ENCODE measurements at regions of chr6 and their contacts with region 1.

Region 1: DNA sequence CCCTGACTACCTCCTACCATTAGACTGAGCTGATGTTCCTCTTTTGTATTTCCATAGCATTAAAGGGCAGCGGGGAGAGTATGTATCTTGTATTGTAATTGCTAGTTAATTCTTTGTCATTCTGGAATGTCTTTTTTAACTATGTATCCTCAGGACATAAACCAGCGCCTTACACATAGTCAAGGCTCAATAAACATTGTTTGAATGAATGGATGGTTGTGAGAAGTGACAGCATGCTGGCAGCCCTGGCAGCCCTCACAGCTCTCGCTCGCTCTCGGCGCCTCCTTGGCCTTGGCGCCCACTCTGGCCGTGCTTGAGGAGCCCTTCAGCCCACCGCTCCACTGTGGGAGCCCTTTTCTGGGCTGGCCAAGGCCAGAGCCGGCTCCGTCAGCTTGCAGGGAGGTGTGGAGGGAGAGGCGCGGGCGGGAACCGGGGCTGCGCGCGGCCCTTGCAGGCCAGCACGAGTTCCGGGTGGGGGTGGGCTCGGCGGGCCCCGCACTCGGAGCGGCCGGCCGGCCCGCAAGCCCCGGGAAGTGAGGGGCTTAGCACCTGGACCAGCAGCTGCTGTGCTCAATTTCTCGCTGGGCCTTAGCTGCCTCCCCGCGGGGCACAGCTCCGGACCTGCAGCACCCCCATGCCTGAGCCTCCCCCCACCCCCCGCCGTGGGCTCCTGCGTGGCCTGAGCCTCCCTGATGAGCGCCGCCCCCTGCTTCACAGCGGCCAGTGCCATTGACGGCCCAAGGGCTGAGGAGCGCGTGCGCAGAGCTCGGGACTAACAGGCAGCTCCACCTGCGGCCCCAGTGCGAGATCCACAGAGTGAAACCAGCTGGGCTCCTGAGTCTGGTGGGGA is 93.1 kb downstream of the RNF182 start:
- DNase-seq: no peak
- H3K4me3 ChIP-seq: no peak overlapping the region
- H3K4me3 Mint-ChIP-seq: no peak overlapping the region
- H3K27ac Mint-ChIP-seq: no peak overlapping the region
- H3K4me1 ChIP-seq: no peaks in the 10 kb centered on the region
- H3K4me1 Mint-ChIP-seq: no peaks in the 10 kb centered on the region
- H3K27me3 ChIP-seq: no peaks in the 10 kb centered on the region
- H3K27me3 Mint-ChIP-seq: peaks cover 4% of the 10 kb centered on the region
- CTCF ChIP-seq: no peak

Region 2: DNA sequence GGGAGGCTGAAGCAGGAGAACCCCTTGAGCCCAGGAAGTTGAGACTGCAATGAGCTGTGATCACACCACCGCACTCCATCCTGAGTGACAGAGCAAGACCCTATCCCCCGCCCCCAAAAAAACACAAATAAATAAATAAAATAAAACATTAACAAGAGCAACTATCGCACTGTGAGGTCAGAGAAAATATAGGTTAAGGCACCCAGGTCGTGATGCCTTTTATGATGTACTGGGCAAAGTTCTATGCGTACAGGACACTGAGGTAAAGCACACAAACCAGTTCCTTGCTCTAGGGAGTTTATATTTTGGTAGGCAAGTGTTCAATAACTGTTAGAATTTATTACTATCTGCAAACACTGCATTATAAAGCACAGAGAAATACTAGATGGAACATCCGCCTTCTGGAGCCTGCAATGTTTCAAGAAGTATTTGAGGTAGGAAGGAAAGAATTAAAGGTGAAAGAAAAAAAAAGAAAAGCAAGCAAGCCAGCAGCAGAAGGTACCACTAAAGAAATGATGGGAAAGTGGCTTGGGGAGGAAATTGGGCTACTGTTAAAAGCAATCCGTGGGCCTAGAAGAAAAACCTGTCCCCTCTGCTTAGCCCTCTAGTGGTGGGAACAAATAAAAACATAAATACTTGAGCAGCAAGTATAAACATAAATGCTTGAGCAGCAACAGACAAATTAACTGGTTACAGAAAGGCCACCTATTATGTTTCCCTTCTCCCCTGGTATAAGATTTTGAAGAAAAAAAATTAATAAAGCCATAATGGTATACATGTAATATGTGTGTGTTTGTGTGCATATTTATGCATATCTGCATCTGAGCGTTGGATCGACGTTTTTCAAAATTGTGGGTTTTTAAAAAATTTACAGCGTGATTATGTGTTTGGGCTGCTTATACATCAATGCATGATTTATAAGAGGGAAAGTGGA is 1173.3 kb before region 1 on chr6:
- CTCF ChIA-PET with region 1: interaction called, 11 read pairs
- POLR2A ChIA-PET with region 1: no interaction called
- intact Hi-C with region 1: no loop called
- DNase-seq: peak in 1 of 2 experiments; percentile 11
- H3K4me3 ChIP-seq: no peak overlapping the region
- H3K4me3 Mint-ChIP-seq: no peak overlapping the region
- H3K27ac Mint-ChIP-seq: no peak overlapping the region
- H3K4me1 ChIP-seq: no peaks in the 10 kb centered on the region
- H3K4me1 Mint-ChIP-seq: no peaks in the 10 kb centered on the region
- H3K27me3 ChIP-seq: no peaks in the 10 kb centered on the region; the same call in 1 of the 2 replicates
- H3K27me3 Mint-ChIP-seq: peaks cover 14% of the 10 kb centered on the region
- CTCF ChIP-seq: peak; percentile 58 to 68

Region 3: DNA sequence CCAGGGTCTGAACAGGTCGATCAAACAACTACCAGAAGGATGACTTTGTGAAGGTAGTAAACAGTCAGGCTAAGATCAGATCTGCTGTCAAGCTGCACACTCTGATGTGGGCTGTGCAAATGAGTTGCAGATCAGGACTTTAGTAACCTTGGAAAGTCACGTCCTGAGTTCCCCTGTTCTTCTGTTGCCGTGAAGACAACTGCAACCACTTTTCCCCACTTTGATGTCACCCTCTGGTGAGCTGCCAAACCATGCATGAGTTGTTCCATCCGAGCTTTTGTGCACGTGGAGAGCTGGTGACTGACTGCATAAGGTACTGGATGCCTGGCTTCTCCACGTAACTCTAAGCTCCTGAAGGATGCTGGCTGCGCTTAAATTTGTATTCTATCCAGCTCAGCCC is 210.7 kb after region 1 on chr6:
- CTCF ChIA-PET with region 1: no interaction called
- POLR2A ChIA-PET with region 1: no interaction called
- intact Hi-C with region 1: no loop called
- DNase-seq: no peak
- H3K4me3 ChIP-seq: no peak overlapping the region
- H3K4me3 Mint-ChIP-seq: no peak overlapping the region
- H3K27ac Mint-ChIP-seq: no peak overlapping the region
- H3K4me1 ChIP-seq: no peaks in the 10 kb centered on the region
- H3K4me1 Mint-ChIP-seq: no peaks in the 10 kb centered on the region
- H3K27me3 ChIP-seq: no peaks in the 10 kb centered on the region
- H3K27me3 Mint-ChIP-seq: no peaks in the 10 kb centered on the region
- CTCF ChIP-seq: no peak

Region 4: GRCh38 chr6:14371530-14371929 is 353.7 kb after region 1 on chr6:
- CTCF ChIA-PET with region 1: no interaction called
- POLR2A ChIA-PET with region 1: no interaction called
- intact Hi-C with region 1: no loop called
- DNase-seq: no peak
- H3K4me3 ChIP-seq: no peak overlapping the region
- H3K4me3 Mint-ChIP-seq: no peak overlapping the region
- H3K27ac Mint-ChIP-seq: no peak overlapping the region
- H3K4me1 ChIP-seq: peaks cover 6% of the 10 kb centered on the region
- H3K4me1 Mint-ChIP-seq: no peaks in the 10 kb centered on the region
- H3K27me3 ChIP-seq: no peaks in the 10 kb centered on the region
- H3K27me3 Mint-ChIP-seq: no peaks in the 10 kb centered on the region
- CTCF ChIP-seq: no peak